Testis (tissue), 5 donors: ENCODE measurements at regions of chr15 and their contacts with region 1.

Region 1: GRCh38 chr15:77419836-77420609 is at the start of gene PEAK1:
- DNase-seq: peak; percentile 99
- H3K4me3 ChIP-seq: peak within 1 kb of the TSS; percentile 71 to 97
- H3K27ac ChIP-seq: peak within 1 kb of the TSS; percentile 94 to 99
- H3K4me1 ChIP-seq: peaks cover 39% of the 10 kb centered on the region
- H3K27me3 ChIP-seq: no peaks in the 10 kb centered on the region
- CTCF ChIP-seq: no peak
- POLR2A ChIP-seq: peak; percentile 43
- total RNA-seq, gene PEAK1: 107 to 130 TPM

Region 2: DNA sequence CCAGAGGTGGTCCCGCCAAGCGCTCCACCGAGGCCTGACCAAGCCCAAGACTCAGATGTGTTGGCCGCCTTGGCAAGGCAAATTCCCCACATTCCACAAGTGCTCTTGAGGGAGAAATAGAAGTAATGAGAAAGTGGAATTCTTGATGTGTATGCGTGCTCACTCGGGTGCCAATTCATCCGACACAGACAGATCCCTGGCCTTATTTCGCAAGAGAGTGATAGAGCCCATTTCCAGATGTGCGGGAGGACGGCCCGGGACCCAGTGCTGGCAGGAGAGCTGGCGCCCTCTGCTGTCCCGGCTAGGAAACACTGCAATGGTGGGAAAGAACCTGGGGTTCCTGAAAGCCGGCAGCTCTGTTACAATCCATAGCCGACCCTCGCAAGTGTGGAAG is 76.7 kb after region 1 on chr15:
- intact Hi-C with region 1: loop called (anchors 10 kb)
- DNase-seq: peak; percentile 93
- H3K4me3 ChIP-seq: peak overlapping the region in 1 of 2 donors; percentile 11
- H3K27ac ChIP-seq: peak overlapping the region; percentile 67 to 80
- H3K4me1 ChIP-seq: peaks cover 46% of the 10 kb centered on the region
- H3K27me3 ChIP-seq: no peaks in the 10 kb centered on the region
- CTCF ChIP-seq: peak; percentile 77 to 90 (median 86)
- POLR2A ChIP-seq: no peak